ENCODE measurements at regions of chr1 and their contacts with region 1.

Region 1: DNA sequence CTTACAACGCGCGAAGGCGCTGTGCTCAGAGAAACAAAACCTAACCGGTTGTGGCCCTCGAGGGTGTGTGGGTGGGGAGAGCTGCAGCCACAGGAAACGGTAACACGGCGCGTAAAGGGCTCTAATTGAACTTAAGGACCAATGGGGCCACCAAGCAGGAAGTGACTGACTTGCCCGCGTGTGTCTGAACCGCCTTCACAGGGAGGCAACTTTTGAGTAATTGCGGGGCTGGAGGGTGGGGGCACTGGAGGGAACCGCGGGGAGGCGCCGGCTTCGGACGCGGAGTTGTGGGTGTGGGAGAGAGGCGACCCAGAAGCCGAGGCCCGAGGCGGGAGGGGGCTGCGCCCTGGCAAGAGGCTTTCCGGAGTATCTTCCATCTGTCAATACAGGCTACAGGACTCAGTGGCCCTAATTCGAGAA is 577 bp upstream of the PNRC2 start:
- DNase-seq: peak; percentile 88
- ATAC-seq: peak; percentile 73 to 80

Region 2: GRCh38 chr1:24027838-24028468 is 68.9 kb after region 1 on chr1:
- intact Hi-C with region 1: loop called (anchors 5 to 10 kb)
- DNase-seq: no peak
- ATAC-seq: peak; percentile 57 to 73